Posterior vena cava (tissue), 2 donors: ENCODE measurements at regions of chr15 and their contacts with region 1.

Region 1: GRCh38 chr15:64430000-64430735 is 30.2 kb upstream of the ZNF609 start:
- DNase-seq: no peak

Region 2: GRCh38 chr15:64651573-64652260 is 221.5 kb after region 1 on chr15:
- intact Hi-C with region 1: loop called in 1 of 2 experiments (anchors 10 kb)
- DNase-seq: no peak

Region 3: GRCh38 chr15:64665179-64665578 is 235.0 kb after region 1 on chr15:
- intact Hi-C with region 1: no loop called
- DNase-seq: no peak

Region 4: GRCh38 chr15:64982472-64982871 is 552.3 kb after region 1 on chr15:
- intact Hi-C with region 1: no loop called
- DNase-seq: no peak